ENCODE measurements at regions of chr6 and their contacts with region 1.

Region 1: GRCh38 chr6:30828027-30828960 is 56.0 kb upstream of the DDR1 start:
- DNase-seq: peak; percentile 92 to 97 (median 94)
- H3K4me3 ChIP-seq: no peak overlapping the region
- H3K27ac ChIP-seq: peak overlapping the region; percentile 23 to 80 (median 78)
- H3K4me1 ChIP-seq: peaks cover 8 to 13% of the 10 kb centered on the region in 2 donors
- H3K27me3 ChIP-seq: no peaks in the 10 kb centered on the region
- CTCF ChIP-seq: peak; percentile 87 to 97 (median 96)
- POLR2A ChIP-seq: peak in 1 of 2 donors; percentile 49

Region 2: DNA sequence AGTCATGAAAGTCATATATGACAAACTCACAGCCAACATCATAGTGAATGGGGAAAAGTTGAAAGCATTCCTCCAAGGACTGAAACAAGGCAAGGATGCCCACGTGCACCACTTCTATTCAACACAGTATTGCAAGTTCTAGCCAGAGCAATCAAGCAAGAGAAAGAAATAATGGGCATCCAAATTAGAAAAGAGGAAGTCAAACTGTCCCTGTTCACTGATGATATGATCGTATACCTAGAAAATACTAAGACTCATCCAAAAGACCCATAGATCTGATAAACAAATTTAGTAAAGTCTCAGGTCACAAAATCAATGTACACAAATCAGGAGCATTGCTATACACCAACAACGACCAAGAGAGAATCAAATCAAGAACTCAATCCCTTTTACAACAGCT is 442.1 kb before region 1 on chr6:
- intact Hi-C with region 1: no loop called
- DNase-seq: no peak
- H3K4me3 ChIP-seq: no peak overlapping the region
- H3K27ac ChIP-seq: no peak overlapping the region
- H3K4me1 ChIP-seq: no peaks in the 10 kb centered on the region
- H3K27me3 ChIP-seq: peaks cover 19% of the 10 kb centered on the region
- CTCF ChIP-seq: no peak
- POLR2A ChIP-seq: no peak

Region 3: GRCh38 chr6:30742316-30743098 is 85.8 kb before region 1 on chr6 and contains the start of gene FLOT1:
- intact Hi-C with region 1: loop called in 1 of 2 experiments (anchors 10 kb)
- DNase-seq: peak; percentile 98 to 99 (median 99)
- H3K4me3 ChIP-seq: peak within 1 kb of the TSS; percentile 57 to 95 (median 76)
- H3K27ac ChIP-seq: peak within 1 kb of the TSS; percentile 93 to 98 (median 94)
- H3K4me1 ChIP-seq: peaks cover 28 to 61% of the 10 kb centered on the region in 2 donors
- H3K27me3 ChIP-seq: no peaks in the 10 kb centered on the region
- CTCF ChIP-seq: no peak
- POLR2A ChIP-seq: peak; percentile 68 to 73
- total RNA-seq, gene FLOT1: 162 to 449 (median 338) TPM

Region 4: DNA sequence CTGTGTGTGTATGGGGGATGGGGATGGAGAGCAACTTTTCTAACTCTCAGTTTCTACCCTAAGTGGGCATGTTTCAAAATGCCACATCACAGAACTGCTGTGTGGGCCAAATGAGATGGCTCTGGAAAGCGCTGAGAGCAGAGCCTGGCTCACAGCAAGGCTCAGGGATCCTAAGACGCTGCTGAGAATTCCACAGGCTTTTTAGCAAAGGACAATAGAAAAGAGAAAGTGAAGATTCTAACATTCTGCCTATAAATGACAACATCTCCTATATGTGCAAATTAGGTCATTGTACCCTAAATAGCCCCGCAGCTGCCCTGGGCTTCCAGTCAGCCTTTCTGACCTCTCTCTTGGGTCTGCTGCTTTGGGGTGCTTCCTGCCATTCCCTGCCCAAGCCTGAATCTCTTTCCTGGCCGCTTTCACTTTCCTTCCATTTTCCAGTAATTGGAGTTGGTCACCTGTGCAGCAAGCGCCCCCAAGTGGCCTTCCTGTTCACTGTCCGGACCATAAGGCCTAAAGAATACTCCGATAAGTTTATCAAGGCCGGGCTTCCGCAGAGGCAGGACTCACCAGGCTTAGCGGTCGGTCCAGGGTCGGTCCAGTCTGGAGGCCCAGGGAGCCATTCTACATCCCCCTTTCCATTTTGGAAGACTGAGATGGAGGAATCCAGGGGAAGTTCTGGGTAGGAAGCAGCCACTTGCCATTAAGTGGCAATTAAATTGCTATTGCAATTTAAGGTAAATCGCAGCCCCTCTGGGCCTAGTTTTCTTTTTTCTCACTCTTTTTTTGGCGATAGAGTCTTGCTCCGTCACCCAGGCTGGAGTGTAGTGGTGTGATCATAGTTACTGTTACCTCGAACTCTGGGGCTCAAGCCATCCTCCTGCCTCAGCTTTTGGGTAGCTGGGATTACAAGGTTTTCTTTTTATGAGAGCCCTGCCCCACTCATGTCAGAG is 49.4 kb after region 1 on chr6:
- intact Hi-C with region 1: loop called (anchors 2 to 5 kb)
- DNase-seq: peak; percentile 91 to 98 (median 96)
- H3K4me3 ChIP-seq: peak overlapping the region in 2 of 4 donors; percentile 3 to 30
- H3K27ac ChIP-seq: peak overlapping the region; percentile 55 to 90 (median 83)
- H3K4me1 ChIP-seq: peaks cover 9 to 36% of the 10 kb centered on the region in 2 donors
- H3K27me3 ChIP-seq: no peaks in the 10 kb centered on the region
- CTCF ChIP-seq: peak; percentile 75 to 99 (median 96)
- POLR2A ChIP-seq: peak in 1 of 2 donors; percentile 68

Region 5: DNA sequence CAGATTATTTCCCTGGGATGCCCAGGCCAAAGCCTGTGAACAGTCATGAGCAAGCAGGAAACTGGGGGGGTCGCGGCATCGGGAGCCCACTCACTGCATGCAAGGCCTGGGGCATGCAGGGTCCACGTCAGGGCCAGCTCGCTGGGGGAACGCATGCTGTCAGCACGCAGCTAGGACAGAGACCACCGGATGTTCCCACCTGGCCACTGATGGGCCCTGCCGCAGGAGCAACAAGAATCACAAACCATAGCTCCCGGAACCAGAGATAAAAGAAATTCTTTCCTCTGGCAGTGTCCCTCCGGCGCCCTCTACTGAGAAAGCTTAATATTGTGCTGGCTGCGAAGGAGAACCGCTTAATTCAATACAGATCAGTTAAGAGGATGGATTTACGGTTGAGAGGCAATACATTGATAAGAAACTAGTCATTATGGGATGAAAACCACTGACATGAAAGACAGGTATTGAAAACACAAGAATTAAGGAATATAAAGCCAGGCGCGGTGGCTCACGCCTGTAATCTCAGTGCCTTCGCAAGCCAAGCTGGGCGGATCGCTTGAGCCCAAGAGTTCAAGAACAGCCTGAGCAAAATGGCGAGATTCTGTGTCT is 251.5 kb after region 1 on chr6:
- intact Hi-C with region 1: loop called in 1 of 2 experiments (anchors 5 kb)
- DNase-seq: peak; percentile 49 to 89 (median 72)
- H3K4me3 ChIP-seq: peak overlapping the region in 1 of 4 donors; percentile 28
- H3K27ac ChIP-seq: no peak overlapping the region
- H3K4me1 ChIP-seq: peaks cover 0 to 3% of the 10 kb centered on the region in 2 donors
- H3K27me3 ChIP-seq: no peaks in the 10 kb centered on the region
- CTCF ChIP-seq: peak; percentile 68 to 81 (median 78)
- POLR2A ChIP-seq: no peak